Activated T-helper 2 cell treated with anti-CD3 and anti-CD28 coated beads, Interferon-gamma antibody, Interleukin-2, Interleukin-4, amounts not matched to agents 10 μg/mL and 5 μg/mL and 100 μg/mL, durations not matched to agents 14 hours and 24 hours and 36 hours (primary cell): ENCODE measurements at regions of chr7 and their contacts with region 1.

Region 1: GRCh38 chr7:17255926-17256325 is 42.5 kb upstream of the AHR start:
- DNase-seq: no peak
- H3K4me3 Mint-ChIP-seq: no peak overlapping the region
- H3K27ac Mint-ChIP-seq: no peak overlapping the region
- H3K4me1 Mint-ChIP-seq: peaks cover 15% of the 10 kb centered on the region
- H3K27me3 Mint-ChIP-seq: no peaks in the 10 kb centered on the region

Region 2: GRCh38 chr7:16982640-16983350 is 273.1 kb before region 1 on chr7:
- intact Hi-C with region 1: loop called (anchors 1 kb)
- DNase-seq: no peak
- H3K4me3 Mint-ChIP-seq: peak overlapping the region; percentile 51
- H3K27ac Mint-ChIP-seq: no peak overlapping the region
- H3K4me1 Mint-ChIP-seq: peaks cover 17% of the 10 kb centered on the region
- H3K27me3 Mint-ChIP-seq: peaks cover 49% of the 10 kb centered on the region

Region 3: DNA sequence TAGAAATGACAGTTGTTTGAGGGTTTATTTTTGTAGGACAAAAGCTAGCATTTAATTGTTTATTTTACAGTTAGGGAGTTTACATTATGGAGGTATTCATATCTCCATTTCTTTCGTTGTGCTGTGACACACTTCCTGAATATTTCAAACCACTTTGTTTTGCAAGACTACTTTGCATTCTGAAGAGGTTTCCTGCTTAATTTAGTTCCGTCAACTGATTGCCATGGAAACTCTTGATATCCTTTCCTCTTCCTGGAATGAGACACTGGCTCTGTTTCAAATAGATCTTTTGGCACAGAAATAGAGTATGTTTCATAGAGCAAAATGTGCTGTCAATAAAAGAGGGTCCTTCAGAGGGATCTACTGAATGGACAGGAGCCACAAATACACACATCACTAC is 214.6 kb before region 1 on chr7:
- intact Hi-C with region 1: loop called (anchors 2 kb)
- DNase-seq: no peak
- H3K4me3 Mint-ChIP-seq: peak overlapping the region; percentile 13
- H3K27ac Mint-ChIP-seq: peak overlapping the region; percentile 57
- H3K4me1 Mint-ChIP-seq: peaks cover 53% of the 10 kb centered on the region
- H3K27me3 Mint-ChIP-seq: peaks cover 2% of the 10 kb centered on the region

Region 4: DNA sequence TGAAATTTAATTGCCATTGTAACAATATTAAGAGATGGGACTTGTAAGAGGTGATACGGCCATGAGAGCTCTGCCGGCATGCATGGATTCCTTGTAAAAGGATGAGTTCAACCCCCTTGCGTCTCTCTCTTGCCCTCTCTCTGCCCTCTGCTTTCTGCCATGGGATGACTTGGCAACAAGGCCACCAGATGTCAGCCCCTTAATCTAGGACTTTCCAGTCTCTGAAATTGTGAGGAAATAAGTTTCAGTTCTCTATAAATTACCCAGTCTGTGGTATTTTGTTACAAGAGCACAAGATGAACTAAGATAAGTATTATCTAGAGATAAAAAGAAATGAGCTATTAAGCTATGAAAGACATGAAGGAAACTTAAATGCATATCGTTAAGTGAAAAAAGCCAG is 103.2 kb before region 1 on chr7:
- intact Hi-C with region 1: loop called (anchors 1 kb)
- DNase-seq: no peak
- H3K4me3 Mint-ChIP-seq: no peak overlapping the region
- H3K27ac Mint-ChIP-seq: peak overlapping the region; percentile 31
- H3K4me1 Mint-ChIP-seq: peaks cover 52% of the 10 kb centered on the region
- H3K27me3 Mint-ChIP-seq: no peaks in the 10 kb centered on the region

Region 5: GRCh38 chr7:17234398-17235031 is 21.4 kb before region 1 on chr7:
- intact Hi-C with region 1: loop called (anchors 1 kb)
- DNase-seq: peak; percentile 67
- H3K4me3 Mint-ChIP-seq: peak overlapping the region; percentile 58
- H3K27ac Mint-ChIP-seq: peak overlapping the region; percentile 83
- H3K4me1 Mint-ChIP-seq: peaks cover 44% of the 10 kb centered on the region
- H3K27me3 Mint-ChIP-seq: peaks cover 3% of the 10 kb centered on the region

Region 6: DNA sequence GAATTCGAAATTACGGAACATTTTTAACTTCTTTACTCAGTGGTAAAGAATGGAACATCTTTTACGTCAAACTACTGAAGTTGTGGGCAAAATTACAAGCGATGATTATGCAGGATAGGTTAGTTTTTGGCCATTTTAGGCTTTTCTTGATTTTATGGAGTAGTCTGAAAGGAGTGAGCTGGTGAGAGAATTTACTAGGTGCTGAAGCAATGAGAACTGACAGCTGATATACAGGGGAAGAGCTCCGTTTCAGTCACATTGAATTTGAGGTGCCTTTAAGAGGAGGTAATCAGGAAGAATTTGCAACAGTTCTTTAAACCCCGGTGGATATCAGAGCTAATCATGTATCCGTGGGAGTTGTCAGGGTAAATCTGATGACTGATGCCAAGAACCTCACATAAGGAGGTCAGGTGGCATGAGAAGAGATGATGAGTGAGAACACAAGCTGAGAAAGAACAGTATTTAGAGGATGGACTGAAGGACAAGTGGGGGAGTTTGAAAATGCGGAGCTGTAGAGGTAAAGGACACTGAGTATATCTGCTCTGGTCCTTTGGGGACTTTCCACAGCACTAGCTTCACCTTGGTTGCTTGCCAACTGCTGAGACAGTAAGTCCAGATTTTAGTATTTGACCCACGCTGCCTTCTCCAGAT is 146.8 kb after region 1 on chr7:
- intact Hi-C with region 1: loop called (anchors 1 kb)
- DNase-seq: no peak
- H3K4me3 Mint-ChIP-seq: peak overlapping the region; percentile 22
- H3K27ac Mint-ChIP-seq: peak overlapping the region; percentile 81
- H3K4me1 Mint-ChIP-seq: peaks cover 35% of the 10 kb centered on the region
- H3K27me3 Mint-ChIP-seq: peaks cover 2% of the 10 kb centered on the region